Thyroid gland (tissue), 4 donors: ENCODE measurements at regions of chr10 and their contacts with region 1.

Region 1: GRCh38 chr10:69644658-69645295 is 14.7 kb downstream of the FAM241B start:
- DNase-seq: peak; percentile 65 to 70
- H3K4me3 ChIP-seq: no peak overlapping the region
- H3K27ac ChIP-seq: no peak overlapping the region
- H3K4me1 ChIP-seq: no peaks in the 10 kb centered on the region
- H3K27me3 ChIP-seq: no peaks in the 10 kb centered on the region
- CTCF ChIP-seq: peak; percentile 74 to 91 (median 84)
- POLR2A ChIP-seq: no peak

Region 2: DNA sequence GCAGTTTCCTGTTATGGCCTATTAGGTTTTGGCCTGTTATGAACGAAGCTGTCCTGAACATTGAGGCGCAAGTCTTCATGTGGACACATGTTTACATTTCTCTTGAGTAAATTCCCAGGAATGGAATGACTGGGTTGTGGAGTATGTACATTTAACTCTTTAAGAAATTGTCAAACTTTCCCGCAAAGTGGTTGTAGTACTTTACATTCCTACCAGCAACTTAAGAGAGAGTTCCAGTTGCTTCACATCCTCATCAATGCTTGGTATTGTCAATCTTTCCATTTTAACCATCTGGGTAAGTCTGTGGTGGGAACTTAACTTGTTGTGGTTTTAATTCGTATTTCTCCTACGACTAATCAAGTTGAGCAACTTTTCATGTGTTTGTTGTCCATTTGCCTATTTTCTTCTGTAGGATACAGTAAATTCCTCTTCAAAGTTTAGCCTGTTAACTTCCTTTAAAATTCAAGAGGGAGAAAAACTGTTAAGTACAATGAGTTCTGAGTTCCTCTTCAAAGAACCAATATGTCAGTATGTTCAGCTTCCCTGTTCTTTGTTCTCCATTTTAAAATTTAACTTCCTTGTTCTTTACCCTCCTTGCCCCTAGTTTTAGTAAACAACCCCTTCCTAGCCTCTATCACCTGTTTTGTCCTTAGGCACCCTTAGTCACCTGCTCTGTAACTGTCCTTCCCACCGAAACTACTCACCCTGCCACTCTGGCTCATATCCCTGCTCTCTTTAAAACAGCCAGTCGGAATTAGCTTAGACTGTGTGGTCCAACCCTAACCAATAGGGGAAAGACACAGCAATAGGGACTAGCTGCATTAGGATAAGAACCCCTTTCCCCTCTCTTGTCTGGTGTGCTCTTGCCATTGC is 59.2 kb after region 1 on chr10:
- intact Hi-C with region 1: no loop called
- DNase-seq: no peak
- H3K4me3 ChIP-seq: no peak overlapping the region
- H3K27ac ChIP-seq: no peak overlapping the region
- H3K4me1 ChIP-seq: no peaks in the 10 kb centered on the region
- H3K27me3 ChIP-seq: no peaks in the 10 kb centered on the region
- CTCF ChIP-seq: no peak
- POLR2A ChIP-seq: no peak

Region 3: DNA sequence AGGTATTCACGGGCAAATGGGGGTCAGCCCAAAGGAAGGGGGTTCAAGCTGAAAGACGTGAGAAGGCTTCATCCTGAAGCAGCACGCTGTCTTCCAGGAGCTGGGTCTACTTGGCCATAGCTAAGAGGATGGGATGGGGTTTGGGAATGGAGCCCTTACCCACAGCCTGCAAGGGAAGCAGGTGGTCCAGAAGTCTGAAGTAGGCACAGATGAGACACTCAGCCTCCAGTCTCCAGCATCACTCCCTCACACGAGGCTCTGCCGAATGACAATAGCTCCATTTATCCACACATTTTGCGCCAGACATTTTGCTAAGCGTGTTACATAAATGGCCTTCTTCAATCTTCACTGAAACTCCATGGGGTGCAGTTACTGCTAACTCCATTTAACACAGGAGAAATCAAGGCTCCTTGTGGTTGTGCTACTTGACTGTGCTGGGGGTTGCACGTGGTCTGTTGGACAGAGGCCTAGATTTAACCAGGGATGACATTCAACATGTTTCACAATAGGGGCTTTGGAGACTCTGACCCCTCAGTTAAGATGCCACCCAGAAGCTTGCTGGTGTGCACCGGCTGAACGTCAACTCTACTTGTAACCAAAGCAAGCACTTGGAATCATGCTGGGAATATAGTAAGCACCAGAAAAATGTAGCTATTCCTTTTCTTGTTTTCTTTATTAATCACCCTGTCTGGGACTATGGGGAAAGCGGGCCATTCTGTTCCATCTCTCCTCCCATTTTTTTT is 70.5 kb after region 1 on chr10:
- intact Hi-C with region 1: loop called (anchors 2 kb)
- DNase-seq: no peak
- H3K4me3 ChIP-seq: no peak overlapping the region
- H3K27ac ChIP-seq: no peak overlapping the region
- H3K4me1 ChIP-seq: no peaks in the 10 kb centered on the region
- H3K27me3 ChIP-seq: no peaks in the 10 kb centered on the region
- CTCF ChIP-seq: no peak
- POLR2A ChIP-seq: no peak